ENCODE measurements at regions of chr20 and their contacts with region 1.

Region 1: GRCh38 chr20:5126512-5127203 is at the start of gene CDS2:
- DNase-seq: peak; percentile 99
- H3K4me3 ChIP-seq: peak within 1 kb of the TSS; percentile 78 to 79
- H3K27ac ChIP-seq: peak within 1 kb of the TSS; percentile 70 to 83
- H3K4me1 ChIP-seq: peaks cover 4 to 7% of the 10 kb centered on the region in 2 experiments; a peak in 1 of 4 replicates
- H3K27me3 ChIP-seq: no peaks in the 10 kb centered on the region
- CTCF ChIP-seq: peak; percentile 64
- EP300 ChIP-seq: no peak
- RAD21 ChIP-seq: peak; percentile 71
- polyA plus RNA-seq, gene CDS2: 13.9 and 22.7 TPM in 2 replicates

Region 2: DNA sequence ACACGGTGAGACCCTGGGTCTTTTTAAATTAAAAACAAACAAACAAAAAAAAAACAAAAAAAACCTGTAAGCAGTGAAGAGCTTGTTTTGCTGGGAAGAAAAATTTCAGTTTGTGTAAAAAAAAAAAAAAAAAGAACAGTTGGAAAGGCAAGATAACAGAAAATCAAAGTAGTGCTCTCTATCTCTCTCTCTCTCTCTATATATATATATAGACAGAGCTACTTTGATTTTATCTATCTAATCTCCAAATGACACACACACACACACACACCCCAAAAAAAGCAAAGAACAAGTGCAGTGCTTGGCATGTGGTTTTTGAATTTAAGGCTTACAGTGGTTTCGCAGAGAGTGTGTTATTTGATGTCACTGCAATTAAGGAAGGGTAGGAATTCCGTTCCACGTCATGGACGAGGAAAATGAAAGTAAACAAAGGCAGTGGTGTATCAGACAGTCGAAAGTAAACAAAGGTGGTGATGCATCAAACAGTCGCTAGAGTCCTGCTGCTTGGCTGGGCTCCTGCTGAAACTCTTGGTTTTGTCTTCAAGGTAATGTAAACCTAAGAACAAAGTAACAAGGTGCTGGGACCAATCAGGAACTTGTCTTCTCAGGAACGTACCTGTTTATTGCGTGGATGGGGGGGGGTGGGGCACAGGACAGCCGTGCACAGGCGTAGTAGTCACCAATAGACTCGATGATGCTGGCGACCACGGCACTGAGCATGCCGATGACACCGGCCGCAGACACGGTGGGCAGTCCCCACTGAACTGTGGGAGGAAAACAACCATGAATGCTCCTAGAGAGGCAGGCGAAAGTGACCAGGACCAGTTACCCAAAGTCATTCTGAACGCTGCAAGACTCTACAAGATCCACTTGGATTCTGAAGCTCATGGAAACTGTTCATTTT is 257.1 kb before region 1 on chr20:
- CTCF ChIA-PET with region 1: no interaction called
- POLR2A ChIA-PET with region 1: no interaction called
- DNase-seq: no peak
- H3K4me3 ChIP-seq: no peak overlapping the region
- H3K27ac ChIP-seq: no peak overlapping the region
- H3K4me1 ChIP-seq: no peaks in the 10 kb centered on the region; a peak in 1 of 4 replicates
- H3K27me3 ChIP-seq: no peaks in the 10 kb centered on the region
- CTCF ChIP-seq: no peak
- EP300 ChIP-seq: no peak
- RAD21 ChIP-seq: no peak

Region 3: GRCh38 chr20:5095454-5095853 is 31.2 kb before region 1 on chr20:
- CTCF ChIA-PET with region 1: no interaction called
- POLR2A ChIA-PET with region 1: no interaction called
- DNase-seq: no peak
- H3K4me3 ChIP-seq: no peak overlapping the region
- H3K27ac ChIP-seq: no peak overlapping the region
- H3K4me1 ChIP-seq: no peaks in the 10 kb centered on the region
- H3K27me3 ChIP-seq: no peaks in the 10 kb centered on the region
- CTCF ChIP-seq: no peak
- EP300 ChIP-seq: no peak
- RAD21 ChIP-seq: no peak

Region 4: GRCh38 chr20:5168651-5169396 is 42.2 kb after region 1 on chr20:
- CTCF ChIA-PET with region 1: interaction called, 10 read pairs
- POLR2A ChIA-PET with region 1: no interaction called
- DNase-seq: no peak
- H3K4me3 ChIP-seq: no peak overlapping the region
- H3K27ac ChIP-seq: no peak overlapping the region; a peak in 1 of 4 replicates
- H3K4me1 ChIP-seq: peaks cover 17 to 40% of the 10 kb centered on the region in 2 experiments; a peak in 3 of 4 replicates
- H3K27me3 ChIP-seq: no peaks in the 10 kb centered on the region
- CTCF ChIP-seq: no peak
- EP300 ChIP-seq: no peak
- RAD21 ChIP-seq: no peak

Region 5: GRCh38 chr20:5181956-5182355 is 55.3 kb after region 1 on chr20:
- CTCF ChIA-PET with region 1: interaction called, 16 read pairs
- POLR2A ChIA-PET with region 1: no interaction called
- DNase-seq: no peak
- H3K4me3 ChIP-seq: no peak overlapping the region
- H3K27ac ChIP-seq: no peak overlapping the region
- H3K4me1 ChIP-seq: peaks cover 0 to 6% of the 10 kb centered on the region in 2 experiments; a peak in 1 of 4 replicates
- H3K27me3 ChIP-seq: no peaks in the 10 kb centered on the region
- CTCF ChIP-seq: no peak
- EP300 ChIP-seq: no peak
- RAD21 ChIP-seq: no peak